ENCODE measurements at regions of chr21 and their contacts with region 1.

Region 1: DNA sequence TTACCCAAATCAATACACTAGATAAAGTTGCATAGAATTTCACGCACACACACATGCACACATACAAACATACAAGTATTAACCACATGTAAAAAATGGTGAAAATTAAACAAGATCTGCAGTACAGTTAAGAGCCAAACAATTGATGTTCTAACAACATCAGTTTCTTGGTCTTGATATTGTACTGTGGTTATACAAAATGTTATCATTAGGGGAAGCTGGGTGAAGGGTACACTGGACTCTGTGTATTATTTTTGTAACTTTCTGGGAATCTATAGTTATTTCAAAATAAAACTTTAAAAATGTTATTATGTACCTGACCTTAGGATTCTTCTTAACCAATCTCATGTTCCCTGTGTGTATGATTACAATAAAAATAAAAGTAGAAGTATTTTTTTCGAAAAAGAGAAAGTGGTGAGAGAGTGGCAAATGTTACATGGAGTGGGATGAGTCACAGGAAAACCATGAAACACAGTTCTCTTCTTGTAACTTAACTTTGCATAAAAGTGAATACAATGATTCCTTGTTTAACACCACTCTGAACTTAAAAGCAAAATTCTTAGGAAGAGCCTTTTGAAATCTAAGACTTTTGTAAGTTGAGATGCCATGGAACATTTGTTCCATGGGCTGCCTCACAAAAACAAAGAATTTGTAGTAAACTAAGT is 101.6 kb upstream of the RUNX1 start:
- DNase-seq: no peak

Region 2: GRCh38 chr21:34073032-34073869 is 1077.4 kb before region 1 on chr21 and contains the starts of genes MRPS6 and SLC5A3:
- intact Hi-C with region 1: no loop called
- DNase-seq: peak; percentile 67 to 97 (median 78)

Region 3: GRCh38 chr21:35217504-35218060 is 66.9 kb after region 1 on chr21:
- intact Hi-C with region 1: loop called (anchors 10 kb)
- DNase-seq: no peak